Heart left ventricle (tissue), 16 donors: ENCODE measurements at regions of chr9 and their contacts with region 1.

Region 1: DNA sequence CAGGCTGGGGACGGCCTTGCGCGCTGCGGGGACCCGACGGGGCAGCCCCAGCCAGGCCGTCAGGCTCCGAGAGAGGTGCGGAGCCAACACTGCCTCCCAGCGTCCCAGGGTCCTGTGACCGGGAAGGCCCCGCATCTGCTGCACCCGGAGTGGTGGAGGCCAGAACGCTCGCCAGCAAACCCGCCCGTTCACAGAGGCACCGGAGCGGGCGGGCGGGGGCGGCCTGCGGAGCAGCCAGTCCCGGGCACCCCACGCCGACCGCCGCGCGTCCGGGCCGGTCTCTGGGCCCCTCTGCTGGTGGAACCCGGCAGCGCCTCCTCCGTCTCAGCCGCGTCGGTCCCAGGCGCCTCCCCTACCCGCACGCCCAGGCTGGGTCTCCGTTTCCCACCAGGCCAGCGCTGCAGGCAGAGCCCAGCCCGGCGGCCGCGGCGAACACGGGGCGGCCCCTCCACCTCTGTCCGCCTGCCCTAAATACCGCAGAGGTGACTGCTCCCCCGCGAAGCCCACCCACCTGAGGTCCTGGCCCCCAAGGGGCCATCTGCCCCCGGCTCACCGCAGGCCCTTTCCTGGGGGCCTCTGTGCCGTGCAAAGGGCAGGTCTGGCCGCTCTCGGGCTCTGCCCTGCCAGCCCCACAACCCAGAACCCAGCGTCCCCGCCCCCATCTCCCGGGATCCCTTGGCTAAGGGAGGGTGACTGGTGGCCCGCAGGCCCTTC is 15.9 kb downstream of the EXD3 start:
- DNase-seq: peak; percentile 69 to 89 (median 80)
- ATAC-seq: peak; percentile 21 to 89 (median 83)
- H3K4me3 ChIP-seq: peak overlapping the region in 11 of 12 donors; percentile 23 to 57 (median 50)
- H3K27ac ChIP-seq: peak overlapping the region in 11 of 12 donors; percentile 18 to 87 (median 72)
- H3K4me1 ChIP-seq: peaks cover 0 to 50% (median 30%) of the 10 kb centered on the region in 12 donors
- H3K27me3 ChIP-seq: peaks cover 0 to 15% (median 0%) of the 10 kb centered on the region in 9 donors
- CTCF ChIP-seq: peak; percentile 74 to 93 (median 87)
- POLR2A ChIP-seq: no peak

Region 2: GRCh38 chr9:137205126-137206069 is 201.6 kb before region 1 on chr9 and contains the starts of genes NDOR1 and TMEM203:
- intact Hi-C with region 1: no loop called
- DNase-seq: peak; percentile 92 to 97 (median 94)
- ATAC-seq: peak in 3 of 4 donors; percentile 48 to 69 (median 68)
- H3K4me3 ChIP-seq: peak within 1 kb of the TSS; percentile 73 to 100 (median 98)
- H3K27ac ChIP-seq: peak within 1 kb of the TSS; percentile 72 to 94 (median 87)
- H3K4me1 ChIP-seq: peaks cover 7 to 64% (median 50%) of the 10 kb centered on the region in 12 donors
- H3K27me3 ChIP-seq: no peaks in the 10 kb centered on the region
- CTCF ChIP-seq: no peak
- POLR2A ChIP-seq: peak; percentile 35 to 83
- total RNA-seq, gene NDOR1: 4.5 to 9.6 (median 6.1) TPM
- total RNA-seq, gene TMEM203: 30.8 to 43.7 (median 39.9) TPM

Region 3: DNA sequence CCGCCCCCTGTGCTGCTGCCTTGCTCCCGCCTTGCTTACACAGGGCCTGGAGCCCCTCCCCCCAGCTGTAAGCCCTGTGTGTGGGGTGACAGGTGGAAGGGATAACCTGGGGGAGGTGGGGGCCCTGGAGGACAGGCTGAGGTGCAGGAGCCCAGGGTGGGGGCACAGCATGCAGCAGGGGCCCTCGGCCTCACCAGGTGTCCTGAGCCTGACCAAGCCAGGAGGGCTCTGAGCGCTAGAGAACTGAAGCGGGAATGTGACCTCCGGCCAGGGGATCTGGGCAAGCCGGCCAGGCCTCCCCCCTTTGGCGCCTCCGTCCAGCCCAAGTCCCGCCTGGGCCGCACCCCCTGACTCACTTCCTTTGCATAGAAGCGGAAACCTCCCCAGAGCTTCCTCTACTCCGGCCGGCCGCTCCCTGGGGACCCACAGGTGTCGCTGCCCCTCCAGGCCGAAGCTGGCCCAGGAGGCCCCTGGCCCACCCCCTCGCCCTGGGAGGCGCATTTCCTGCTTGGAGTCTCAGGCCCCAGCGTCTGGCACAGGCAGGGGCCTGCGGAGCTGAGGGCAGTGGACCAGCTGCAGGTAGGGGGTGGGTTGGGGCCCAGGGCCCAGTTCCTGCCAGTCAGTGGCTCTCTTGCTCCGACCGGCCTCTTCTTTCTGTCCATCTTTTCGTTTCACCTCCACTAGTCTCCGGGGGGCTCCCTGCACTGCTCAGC is 129.5 kb before region 1 on chr9 and contains the start of gene TOR4A:
- intact Hi-C with region 1: loop called in 1 of 10 experiments (anchors 5 kb)
- DNase-seq: peak; percentile 94 to 95 (median 94)
- ATAC-seq: peak; percentile 74 to 90 (median 75)
- H3K4me3 ChIP-seq: peak within 1 kb of the TSS; percentile 19 to 71 (median 64)
- H3K27ac ChIP-seq: peak within 1 kb of the TSS; percentile 83 to 100 (median 98)
- H3K4me1 ChIP-seq: peaks cover 6 to 78% (median 41%) of the 10 kb centered on the region in 12 donors
- H3K27me3 ChIP-seq: no peaks in the 10 kb centered on the region
- CTCF ChIP-seq: peak in 3 of 12 donors; percentile 5 to 47 (median 23)
- POLR2A ChIP-seq: peak in 1 of 2 donors; percentile 52
- total RNA-seq, gene TOR4A: 14.0 to 46.4 (median 18.5) TPM

Region 4: GRCh38 chr9:137295238-137295811 is 111.7 kb before region 1 on chr9:
- intact Hi-C with region 1: loop called in 9 of 10 experiments (anchors 2 to 5 kb)
- DNase-seq: peak in 3 of 5 donors; percentile 28 to 78 (median 47)
- ATAC-seq: peak in 2 of 4 donors; percentile 49 to 51
- H3K4me3 ChIP-seq: peak overlapping the region in 11 of 12 donors; percentile 17 to 70 (median 52)
- H3K27ac ChIP-seq: peak overlapping the region in 10 of 12 donors; percentile 49 to 98 (median 89)
- H3K4me1 ChIP-seq: peaks cover 0 to 61% (median 27%) of the 10 kb centered on the region in 12 donors
- H3K27me3 ChIP-seq: peaks cover 0 to 63% (median 20%) of the 10 kb centered on the region in 9 donors
- CTCF ChIP-seq: peak in 11 of 12 donors; percentile 20 to 92 (median 62)
- POLR2A ChIP-seq: no peak

Region 5: DNA sequence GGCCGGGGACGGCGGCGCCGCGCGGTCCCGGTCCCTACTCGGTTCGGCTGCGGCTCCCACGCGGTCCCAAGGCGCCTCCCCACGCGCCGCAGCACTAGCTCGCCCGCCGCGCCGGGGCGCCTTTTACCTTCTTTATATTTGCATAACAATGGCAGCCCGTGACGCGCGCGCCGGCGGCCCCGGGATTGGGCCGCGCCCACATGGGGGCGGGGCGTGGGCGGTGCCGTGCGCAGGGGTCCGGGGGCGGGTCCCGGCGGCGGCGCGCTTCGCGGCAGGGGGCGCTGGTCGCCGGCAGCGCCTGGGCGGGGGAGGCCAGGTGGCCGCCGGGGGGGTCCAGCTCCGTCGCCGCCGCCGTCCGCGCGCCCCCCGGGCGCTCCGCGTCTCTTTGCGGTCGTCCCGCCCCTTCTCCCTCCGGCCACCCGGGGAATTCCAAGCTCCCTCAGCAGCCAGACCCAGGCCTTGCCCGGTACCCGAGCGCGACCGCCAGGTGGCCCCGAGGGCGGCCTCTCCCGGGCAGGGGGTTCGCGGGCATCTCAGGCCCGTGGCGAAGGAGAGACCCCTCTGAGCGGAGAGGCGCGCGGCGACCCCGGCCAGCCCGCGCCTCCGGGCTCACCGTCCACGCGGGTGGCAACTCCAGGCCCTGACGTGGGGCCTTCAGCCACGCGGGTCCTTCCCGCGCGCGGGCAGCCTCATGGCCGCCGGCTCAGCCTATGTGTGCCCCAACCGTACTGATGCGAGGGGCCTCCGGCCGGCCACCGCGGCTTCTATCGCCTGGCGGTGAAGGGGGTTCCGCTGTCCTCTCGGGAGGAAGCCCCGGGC is 104.6 kb before region 1 on chr9 and contains the start of gene NRARP:
- intact Hi-C with region 1: loop called in 7 of 10 experiments (anchors 2 to 5 kb)
- DNase-seq: peak; percentile 92 to 96 (median 94)
- ATAC-seq: peak; percentile 47 to 77 (median 67)
- H3K4me3 ChIP-seq: peak within 1 kb of the TSS; percentile 48 to 94 (median 68)
- H3K27ac ChIP-seq: peak within 1 kb of the TSS; percentile 63 to 98 (median 88)
- H3K4me1 ChIP-seq: peaks cover 12 to 91% (median 52%) of the 10 kb centered on the region in 12 donors
- H3K27me3 ChIP-seq: peaks cover 0 to 62% (median 6%) of the 10 kb centered on the region in 9 donors
- CTCF ChIP-seq: peak; percentile 30 to 69 (median 51)
- POLR2A ChIP-seq: peak; percentile 25 to 91
- total RNA-seq, gene NRARP: 6.4 to 15.8 (median 10.3) TPM

Region 6: GRCh38 chr9:137353223-137354152 is 53.5 kb before region 1 on chr9:
- intact Hi-C with region 1: loop called in 1 of 10 experiments (anchors 5 kb)
- DNase-seq: peak; percentile 61 to 81 (median 72)
- ATAC-seq: peak; percentile 38 to 83 (median 73)
- H3K4me3 ChIP-seq: no peak overlapping the region
- H3K27ac ChIP-seq: peak overlapping the region; percentile 44 to 86 (median 73)
- H3K4me1 ChIP-seq: peaks cover 0 to 27% (median 13%) of the 10 kb centered on the region in 12 donors
- H3K27me3 ChIP-seq: no peaks in the 10 kb centered on the region
- CTCF ChIP-seq: no peak
- POLR2A ChIP-seq: no peak

Region 7: GRCh38 chr9:137461663-137462395 is 54.8 kb after region 1 on chr9:
- intact Hi-C with region 1: loop called in 1 of 10 experiments (anchors 10 kb)
- DNase-seq: peak in 3 of 5 donors; percentile 47 to 85 (median 52)
- ATAC-seq: peak in 1 of 4 donors; percentile 5
- H3K4me3 ChIP-seq: peak overlapping the region in 1 of 12 donors; percentile 43
- H3K27ac ChIP-seq: peak overlapping the region in 1 of 12 donors; percentile 58
- H3K4me1 ChIP-seq: peaks cover 3 to 39% (median 14%) of the 10 kb centered on the region in 12 donors
- H3K27me3 ChIP-seq: peaks cover 0 to 7% (median 0%) of the 10 kb centered on the region in 9 donors
- CTCF ChIP-seq: no peak
- POLR2A ChIP-seq: no peak